Activated CD4-positive, alpha-beta T cell treated with anti-CD3 and anti-CD28 coated beads, Interleukin-2, amount 10 ng/mL, durations not matched to agents 24 days and 14 days (primary cell): ENCODE measurements at regions of chr1 and their contacts with region 1.

Region 1: GRCh38 chr1:192639607-192640368 is 3.8 kb downstream of the RGS13 start:
- DNase-seq: no peak
- H3K4me3 Mint-ChIP-seq: no peak overlapping the region
- H3K27ac Mint-ChIP-seq: no peak overlapping the region
- H3K4me1 Mint-ChIP-seq: peaks cover 4% of the 10 kb centered on the region
- H3K27me3 Mint-ChIP-seq: peaks cover 4% of the 10 kb centered on the region

Region 2: GRCh38 chr1:192654591-192655251 is 14.9 kb after region 1 on chr1:
- intact Hi-C with region 1: loop called (anchors 2 kb)
- DNase-seq: no peak
- H3K4me3 Mint-ChIP-seq: no peak overlapping the region
- H3K27ac Mint-ChIP-seq: no peak overlapping the region
- H3K4me1 Mint-ChIP-seq: no peaks in the 10 kb centered on the region
- H3K27me3 Mint-ChIP-seq: no peaks in the 10 kb centered on the region